BJ (cell line): ENCODE measurements at regions of chr19 and their contacts with region 1.

Region 1: DNA sequence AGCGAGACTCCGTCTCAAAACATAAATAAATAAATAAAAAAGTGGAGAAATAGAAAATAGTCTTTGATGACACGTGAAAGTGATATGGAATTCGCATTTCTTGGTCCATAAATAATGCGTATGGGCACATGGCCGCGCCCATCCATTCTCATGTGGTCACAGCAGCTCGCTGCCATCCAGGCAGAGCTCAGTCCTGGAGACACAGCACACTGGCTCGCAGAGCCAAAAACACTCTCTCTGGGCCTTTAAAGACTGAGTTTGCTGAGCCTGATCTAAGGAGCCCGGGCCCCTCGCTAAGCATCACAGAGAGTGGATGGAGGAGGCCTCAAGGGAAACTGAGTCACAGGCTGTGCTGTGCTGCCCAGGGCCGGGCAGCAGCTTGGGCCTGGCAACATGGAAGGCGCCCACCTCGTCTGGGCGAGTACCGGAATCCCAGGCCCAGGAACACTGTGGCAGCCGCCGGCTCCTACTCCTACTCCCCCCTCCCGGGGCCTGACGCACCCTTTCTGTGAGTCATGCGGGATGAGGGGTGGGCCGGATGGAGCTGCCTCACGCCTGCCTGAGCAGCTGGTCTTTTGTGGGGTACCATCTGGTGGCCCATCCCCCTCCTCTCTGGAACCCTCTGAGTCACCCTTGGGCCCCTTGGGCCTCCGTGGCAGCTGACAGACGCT is 28.9 kb upstream of the CACTIN start:
- DNase-seq: peak; percentile 82
- H3K4me3 ChIP-seq: no peak overlapping the region
- H3K27me3 ChIP-seq: no peaks in the 10 kb centered on the region
- CTCF ChIP-seq: no peak

Region 2: GRCh38 chr19:3608750-3609322 is 46.7 kb before region 1 on chr19:
- CTCF ChIA-PET with region 1: no interaction called
- POLR2A ChIA-PET with region 1: interaction called, 12 read pairs
- DNase-seq: no peak
- H3K4me3 ChIP-seq: no peak overlapping the region
- H3K27me3 ChIP-seq: no peaks in the 10 kb centered on the region
- CTCF ChIP-seq: no peak

Region 3: DNA sequence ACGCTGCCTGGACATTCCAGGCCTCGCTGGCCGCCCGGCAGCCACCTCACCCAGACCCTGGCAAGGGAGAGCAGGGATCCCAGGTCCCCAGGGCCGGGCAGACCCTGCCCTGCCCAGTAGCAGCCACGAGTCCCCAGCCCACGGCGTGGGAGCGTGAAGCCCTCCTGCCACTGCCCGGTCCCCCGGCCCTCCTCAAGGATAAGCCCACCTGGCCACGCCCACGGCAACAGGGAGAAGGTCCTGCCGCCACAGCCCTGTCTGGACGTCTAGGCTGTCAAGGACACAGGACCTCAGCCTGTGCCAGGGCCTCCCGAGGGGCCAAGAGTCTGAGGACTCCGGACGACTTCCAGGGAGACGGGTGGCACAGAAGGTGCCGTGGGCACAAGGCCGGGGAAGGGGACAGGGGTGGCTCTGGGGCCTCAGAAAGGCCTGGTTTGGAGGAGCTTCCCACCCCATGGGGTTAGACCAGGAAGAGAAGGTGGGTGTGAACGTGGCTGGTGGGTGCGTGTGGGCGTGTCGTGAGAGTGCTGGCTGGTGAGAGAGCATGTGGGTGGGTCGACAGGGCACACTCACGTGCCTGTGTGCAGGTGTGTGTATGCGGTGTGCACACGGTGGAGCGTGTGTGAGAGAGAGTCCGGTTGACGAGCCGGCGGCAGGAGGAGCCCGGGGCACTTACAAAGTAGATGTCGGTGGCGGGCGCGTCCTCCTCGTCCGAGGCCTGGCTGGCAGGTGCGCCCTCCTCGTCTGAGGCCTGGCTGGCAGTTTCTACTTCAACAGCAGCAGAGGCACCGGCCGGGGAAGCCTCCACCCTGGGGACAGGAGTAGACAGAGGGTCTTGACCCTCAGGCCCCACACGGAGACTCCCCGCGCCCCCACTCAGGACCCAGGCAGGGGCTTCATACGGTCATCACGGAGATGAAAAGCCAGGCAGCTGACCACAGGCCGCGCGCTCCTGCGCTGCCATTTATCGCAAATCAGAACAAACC is 17.0 kb before region 1 on chr19:
- CTCF ChIA-PET with region 1: no interaction called
- POLR2A ChIA-PET with region 1: no interaction called
- DNase-seq: no peak
- H3K4me3 ChIP-seq: no peak overlapping the region
- H3K27me3 ChIP-seq: no peaks in the 10 kb centered on the region
- CTCF ChIP-seq: no peak

Region 4: GRCh38 chr19:3665681-3666544 is 10.4 kb after region 1 on chr19:
- CTCF ChIA-PET with region 1: interaction called, 19 read pairs
- POLR2A ChIA-PET with region 1: no interaction called
- DNase-seq: no peak
- H3K4me3 ChIP-seq: no peak overlapping the region
- H3K27me3 ChIP-seq: no peaks in the 10 kb centered on the region
- CTCF ChIP-seq: peak; percentile 94